ENCODE measurements at regions of chr1 and their contacts with region 1.

Region 1: DNA sequence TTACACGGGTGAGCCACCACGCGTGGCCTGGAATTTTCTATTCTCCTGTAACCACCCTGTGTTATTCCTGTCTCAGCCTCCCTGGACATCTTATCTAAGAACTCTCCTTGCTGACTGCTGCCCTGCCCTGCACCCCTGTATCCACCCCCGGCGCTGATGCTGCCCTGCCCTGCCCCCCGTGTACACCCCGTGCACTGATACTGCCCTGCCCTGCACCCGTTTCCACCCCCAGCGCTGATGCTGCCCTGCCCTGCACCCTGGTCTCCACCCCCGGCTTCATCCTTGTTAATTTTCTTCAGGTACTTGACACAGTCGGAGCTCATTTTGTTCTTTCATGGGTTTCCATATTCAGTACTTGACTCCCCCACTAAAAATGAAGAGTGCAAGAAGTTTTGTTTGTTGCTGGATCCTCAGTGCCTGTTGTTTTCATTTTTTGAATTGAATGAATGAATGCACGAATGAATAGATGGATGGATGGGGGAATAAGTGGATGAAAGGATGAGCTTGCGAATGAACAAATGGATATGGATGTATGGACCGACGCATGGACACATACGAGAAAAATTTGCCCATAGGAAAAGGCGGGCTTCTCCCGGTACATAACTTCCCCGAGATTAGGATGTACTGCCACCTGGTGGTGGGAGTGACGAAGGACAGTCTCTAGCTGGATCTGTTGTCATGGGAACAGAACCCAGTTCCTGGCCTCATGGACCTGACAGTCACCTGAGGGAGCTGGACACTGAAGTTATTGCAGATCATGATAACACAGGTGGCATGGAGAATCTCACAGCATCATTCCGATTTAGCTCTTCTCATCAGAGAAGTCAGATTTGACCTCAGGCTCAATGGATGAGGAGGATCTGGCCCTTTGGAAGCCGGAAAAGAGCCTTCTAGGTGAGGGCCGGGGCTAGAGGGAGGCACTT is 14.9 kb downstream of the AADACL4 start:
- DNase-seq: peak; percentile 59 to 88
- ATAC-seq: peak; percentile 76 to 88 (median 87)
- H3K4me3 ChIP-seq: no peak overlapping the region
- H3K4me3 Mint-ChIP-seq: no peak overlapping the region
- H3K27ac ChIP-seq: no peak overlapping the region
- H3K27ac Mint-ChIP-seq: no peak overlapping the region
- H3K4me1 ChIP-seq: no peaks in the 10 kb centered on the region
- H3K4me1 Mint-ChIP-seq: peaks cover 6 to 7% of the 10 kb centered on the region in 2 donors
- H3K27me3 ChIP-seq: no peaks in the 10 kb centered on the region
- H3K27me3 Mint-ChIP-seq: peaks cover 0 to 5% of the 10 kb centered on the region in 2 donors
- CTCF ChIP-seq: peak; percentile 96

Region 2: DNA sequence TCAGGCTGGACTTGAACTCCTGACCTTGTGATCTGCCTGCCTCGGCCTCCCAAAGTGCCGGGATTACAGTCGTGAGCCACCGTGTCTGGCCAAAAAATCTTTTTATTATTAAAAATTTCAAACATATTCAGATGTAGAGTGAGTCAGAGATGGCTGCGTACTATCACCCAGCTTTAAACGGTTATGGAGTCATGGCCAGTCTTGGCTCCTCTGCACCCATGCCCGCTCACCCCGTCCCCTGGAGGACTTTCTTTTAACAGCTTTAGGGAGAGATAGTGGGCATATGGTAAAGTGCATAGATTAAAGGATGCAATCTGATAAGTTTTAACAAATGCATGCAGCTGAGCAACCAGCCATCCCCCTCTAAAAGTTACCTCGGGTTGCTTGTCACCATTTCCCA is 543.9 kb before region 1 on chr1:
- intact Hi-C with region 1: loop called (anchors 5 kb)
- DNase-seq: no peak
- ATAC-seq: no peak
- H3K4me3 ChIP-seq: no peak overlapping the region
- H3K4me3 Mint-ChIP-seq: no peak overlapping the region
- H3K27ac ChIP-seq: no peak overlapping the region
- H3K27ac Mint-ChIP-seq: no peak overlapping the region
- H3K4me1 ChIP-seq: peaks cover 11% of the 10 kb centered on the region
- H3K4me1 Mint-ChIP-seq: peaks cover 0 to 7% of the 10 kb centered on the region in 2 donors
- H3K27me3 ChIP-seq: no peaks in the 10 kb centered on the region
- H3K27me3 Mint-ChIP-seq: peaks cover 0 to 8% of the 10 kb centered on the region in 2 donors
- CTCF ChIP-seq: no peak

Region 3: DNA sequence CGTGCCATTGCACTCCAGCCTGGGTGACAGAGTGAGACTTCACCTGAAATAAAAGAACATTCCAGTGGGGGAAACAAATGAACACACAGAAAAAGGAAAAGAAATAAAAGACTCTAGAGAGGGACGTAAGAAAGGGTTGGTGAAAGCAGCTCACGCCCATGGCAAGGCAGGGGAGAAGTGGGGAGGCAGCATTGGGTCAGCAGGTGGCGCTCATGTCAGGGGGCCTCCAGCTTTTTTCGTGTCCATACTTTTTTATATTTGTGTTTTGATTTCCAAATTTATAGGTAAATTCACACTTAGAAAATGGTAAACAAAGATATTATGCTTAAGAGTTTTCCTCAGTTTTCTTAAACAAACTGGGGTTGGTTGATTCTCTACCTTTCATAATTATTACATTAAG is 383.4 kb before region 1 on chr1:
- intact Hi-C with region 1: loop called (anchors 1 kb)
- DNase-seq: peak in 1 of 2 donors; percentile 51
- ATAC-seq: peak in 1 of 3 donors; percentile 43
- H3K4me3 ChIP-seq: no peak overlapping the region
- H3K4me3 Mint-ChIP-seq: no peak overlapping the region
- H3K27ac ChIP-seq: no peak overlapping the region
- H3K27ac Mint-ChIP-seq: no peak overlapping the region
- H3K4me1 ChIP-seq: no peaks in the 10 kb centered on the region
- H3K4me1 Mint-ChIP-seq: no peaks in the 10 kb centered on the region
- H3K27me3 ChIP-seq: no peaks in the 10 kb centered on the region
- H3K27me3 Mint-ChIP-seq: no peaks in the 10 kb centered on the region
- CTCF ChIP-seq: peak; percentile 37

Region 4: DNA sequence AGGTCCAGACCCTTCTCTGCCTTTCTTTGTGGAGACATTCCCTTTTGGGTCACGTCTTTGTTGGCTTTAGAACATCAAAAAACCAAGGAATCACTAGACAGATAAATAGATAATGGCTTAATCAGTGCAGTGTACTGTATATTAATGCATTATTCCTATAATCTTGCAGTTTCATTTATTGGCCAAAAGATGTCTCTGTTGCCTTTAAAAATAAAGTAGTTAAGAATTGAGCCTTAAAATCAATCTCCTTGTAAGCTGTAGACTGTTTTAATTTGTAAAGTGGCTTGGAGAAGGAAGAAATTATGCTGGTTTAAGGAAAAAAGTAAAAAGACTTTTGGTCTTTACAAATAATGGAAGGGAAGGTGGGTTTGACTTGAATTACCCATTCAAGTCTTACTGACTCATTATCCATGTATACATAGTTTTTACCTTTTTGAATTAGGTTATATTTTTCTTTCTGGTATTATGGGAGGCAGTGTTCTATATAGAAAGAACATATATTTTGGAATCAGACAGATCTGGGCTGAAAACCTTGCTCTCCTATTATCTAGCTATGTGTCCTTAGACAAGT is 344.4 kb before region 1 on chr1:
- intact Hi-C with region 1: loop called (anchors 1 kb)
- DNase-seq: peak in 1 of 2 donors; percentile 48
- ATAC-seq: peak in 2 of 3 donors; percentile 53 to 64
- H3K4me3 ChIP-seq: no peak overlapping the region
- H3K4me3 Mint-ChIP-seq: no peak overlapping the region
- H3K27ac ChIP-seq: no peak overlapping the region
- H3K27ac Mint-ChIP-seq: no peak overlapping the region
- H3K4me1 ChIP-seq: no peaks in the 10 kb centered on the region
- H3K4me1 Mint-ChIP-seq: no peaks in the 10 kb centered on the region
- H3K27me3 ChIP-seq: no peaks in the 10 kb centered on the region
- H3K27me3 Mint-ChIP-seq: no peaks in the 10 kb centered on the region
- CTCF ChIP-seq: peak; percentile 62

Region 5: GRCh38 chr1:12407050-12407961 is 251.5 kb before region 1 on chr1:
- intact Hi-C with region 1: loop called (anchors 1 kb)
- DNase-seq: peak in 1 of 2 donors; percentile 63
- ATAC-seq: peak in 2 of 3 donors; percentile 73 to 74
- H3K4me3 ChIP-seq: no peak overlapping the region
- H3K4me3 Mint-ChIP-seq: no peak overlapping the region
- H3K27ac ChIP-seq: no peak overlapping the region
- H3K27ac Mint-ChIP-seq: peak overlapping the region in 1 of 2 donors; percentile 51
- H3K4me1 ChIP-seq: no peaks in the 10 kb centered on the region
- H3K4me1 Mint-ChIP-seq: peaks cover 13 to 16% of the 10 kb centered on the region in 2 donors
- H3K27me3 ChIP-seq: no peaks in the 10 kb centered on the region
- H3K27me3 Mint-ChIP-seq: no peaks in the 10 kb centered on the region
- CTCF ChIP-seq: peak; percentile 56

Measured in natural killer cell (primary cell).